ENCODE measurements at regions of chr7 and their contacts with region 1.

Region 1: DNA sequence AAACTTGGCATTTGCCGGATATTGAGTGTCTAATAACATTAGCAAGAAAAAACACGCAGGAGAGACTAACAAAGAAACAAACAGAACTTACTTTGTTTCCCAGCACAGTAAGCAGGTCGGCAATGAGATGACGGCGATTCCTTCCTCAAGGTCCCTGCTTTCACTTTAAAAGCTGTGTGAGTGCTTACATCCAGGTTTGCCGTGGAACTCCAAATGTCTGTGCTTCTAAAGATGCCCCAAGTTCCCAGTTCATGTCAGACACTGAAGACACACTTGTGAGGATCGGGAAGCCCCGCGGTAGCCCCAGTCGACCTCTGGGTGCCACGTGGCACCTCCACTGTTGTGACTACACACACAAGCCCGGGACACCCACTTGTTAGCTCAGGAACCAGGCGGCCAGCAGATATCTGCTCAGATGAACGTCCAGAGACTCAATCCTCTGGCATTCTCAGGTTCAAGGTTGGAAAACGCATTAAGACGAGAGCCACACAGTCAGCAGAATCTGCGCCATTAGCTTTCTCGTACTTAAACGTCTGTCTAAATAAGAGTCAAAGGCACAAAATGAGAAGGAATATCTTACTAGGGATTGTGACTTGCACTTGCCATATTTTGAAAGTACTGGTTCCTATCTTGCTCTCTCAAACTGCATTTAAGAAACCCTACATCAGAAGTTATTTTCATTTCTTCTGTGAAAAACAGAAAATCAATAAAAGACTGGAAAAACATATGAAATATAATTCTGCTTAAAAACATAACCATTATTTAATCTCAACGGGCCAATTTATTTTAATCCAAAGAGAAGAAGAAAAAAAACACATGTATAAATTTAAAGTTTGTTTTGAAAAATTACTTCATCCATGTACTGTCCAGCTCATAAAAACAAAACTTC is 207.6 kb upstream of the KLF14 start:
- DNase-seq: peak; percentile 55
- ATAC-seq: no peak
- H3K4me3 ChIP-seq: peak overlapping the region; percentile 9 to 42 (median 28)
- H3K4me3 Mint-ChIP-seq: peak overlapping the region; percentile 76
- H3K27ac ChIP-seq: peak overlapping the region; percentile 38 to 92
- H3K27ac Mint-ChIP-seq: peak overlapping the region; percentile 65
- H3K4me1 ChIP-seq: peaks cover 34 to 38% of the 10 kb centered on the region in 2 donors
- H3K4me1 Mint-ChIP-seq: peaks cover 83% of the 10 kb centered on the region
- H3K27me3 ChIP-seq: no peaks in the 10 kb centered on the region
- H3K27me3 Mint-ChIP-seq: no peaks in the 10 kb centered on the region
- CTCF ChIP-seq: no peak

Region 2: GRCh38 chr7:130793855-130794618 is 147.5 kb before region 1 on chr7:
- CTCF ChIA-PET with region 1: no interaction called
- POLR2A ChIA-PET with region 1: no interaction called
- intact Hi-C with region 1: no loop called
- DNase-seq: no peak
- ATAC-seq: no peak
- H3K4me3 ChIP-seq: no peak overlapping the region
- H3K4me3 Mint-ChIP-seq: no peak overlapping the region
- H3K27ac ChIP-seq: no peak overlapping the region
- H3K27ac Mint-ChIP-seq: no peak overlapping the region
- H3K4me1 ChIP-seq: no peaks in the 10 kb centered on the region
- H3K4me1 Mint-ChIP-seq: no peaks in the 10 kb centered on the region
- H3K27me3 ChIP-seq: peaks cover 0 to 2% (median 0%) of the 10 kb centered on the region in 4 experiments
- H3K27me3 Mint-ChIP-seq: peaks cover 5% of the 10 kb centered on the region
- CTCF ChIP-seq: no peak

Region 3: GRCh38 chr7:130912862-130913631 is 28.5 kb before region 1 on chr7:
- CTCF ChIA-PET with region 1: interaction called, 4 read pairs
- POLR2A ChIA-PET with region 1: no interaction called
- intact Hi-C with region 1: loop called (anchors 1 kb)
- DNase-seq: peak; percentile 92
- ATAC-seq: peak; percentile 91
- H3K4me3 ChIP-seq: peak overlapping the region; percentile 54 to 98 (median 73)
- H3K4me3 Mint-ChIP-seq: peak overlapping the region; percentile 90
- H3K27ac ChIP-seq: peak overlapping the region; percentile 82 to 98
- H3K27ac Mint-ChIP-seq: peak overlapping the region; percentile 84
- H3K4me1 ChIP-seq: peaks cover 28 to 37% of the 10 kb centered on the region in 2 donors
- H3K4me1 Mint-ChIP-seq: peaks cover 78% of the 10 kb centered on the region
- H3K27me3 ChIP-seq: no peaks in the 10 kb centered on the region
- H3K27me3 Mint-ChIP-seq: no peaks in the 10 kb centered on the region
- CTCF ChIP-seq: no peak

Region 4: GRCh38 chr7:130954918-130955564 is 13.5 kb after region 1 on chr7:
- CTCF ChIA-PET with region 1: interaction called, 7 read pairs
- POLR2A ChIA-PET with region 1: interaction called, 7 read pairs
- intact Hi-C with region 1: loop called (anchors 1 kb)
- DNase-seq: no peak
- ATAC-seq: no peak
- H3K4me3 ChIP-seq: no peak overlapping the region
- H3K4me3 Mint-ChIP-seq: peak overlapping the region; percentile 30
- H3K27ac ChIP-seq: peak overlapping the region in 1 of 2 donors; percentile 88
- H3K27ac Mint-ChIP-seq: peak overlapping the region; percentile 89
- H3K4me1 ChIP-seq: peaks cover 51 to 68% of the 10 kb centered on the region in 2 donors
- H3K4me1 Mint-ChIP-seq: peaks cover 67% of the 10 kb centered on the region
- H3K27me3 ChIP-seq: no peaks in the 10 kb centered on the region
- H3K27me3 Mint-ChIP-seq: no peaks in the 10 kb centered on the region
- CTCF ChIP-seq: no peak